Transverse colon (tissue), 4 donors: ENCODE measurements at regions of chr1 and their contacts with region 1.

Region 1: GRCh38 chr1:47137925-47138615 is 829 bp downstream of the CYP4A22 start:
- DNase-seq: no peak
- H3K4me3 ChIP-seq: no peak overlapping the region
- H3K27ac ChIP-seq: no peak overlapping the region
- H3K4me1 ChIP-seq: no peaks in the 10 kb centered on the region
- H3K27me3 ChIP-seq: no peaks in the 10 kb centered on the region
- CTCF ChIP-seq: no peak
- EP300 ChIP-seq: no peak
- POLR2A ChIP-seq: no peak

Region 2: GRCh38 chr1:46910790-46911189 is 227.3 kb before region 1 on chr1:
- in situ Hi-C with region 1: no loop called
- intact Hi-C with region 1: no loop called
- DNase-seq: no peak
- H3K4me3 ChIP-seq: no peak overlapping the region
- H3K27ac ChIP-seq: no peak overlapping the region
- H3K4me1 ChIP-seq: no peaks in the 10 kb centered on the region
- H3K27me3 ChIP-seq: no peaks in the 10 kb centered on the region
- CTCF ChIP-seq: no peak
- EP300 ChIP-seq: no peak
- POLR2A ChIP-seq: no peak

Region 3: GRCh38 chr1:46937270-46937669 is 200.8 kb before region 1 on chr1:
- in situ Hi-C with region 1: loop called in 1 of 4 experiments (anchors 5 kb)
- intact Hi-C with region 1: no loop called
- DNase-seq: no peak
- H3K4me3 ChIP-seq: no peak overlapping the region
- H3K27ac ChIP-seq: no peak overlapping the region
- H3K4me1 ChIP-seq: peaks cover 0 to 4% (median 0%) of the 10 kb centered on the region in 4 donors
- H3K27me3 ChIP-seq: no peaks in the 10 kb centered on the region
- CTCF ChIP-seq: no peak
- EP300 ChIP-seq: no peak
- POLR2A ChIP-seq: no peak